Dendritic cell treated with granulocyte-macrophage colony-stimulating factor and Interleukin-4, amounts not matched to agents 40 ng/mL and 50 ng/mL, for 4 days (primary cell): ENCODE measurements at regions of chr4 and their contacts with region 1.

Region 1: DNA sequence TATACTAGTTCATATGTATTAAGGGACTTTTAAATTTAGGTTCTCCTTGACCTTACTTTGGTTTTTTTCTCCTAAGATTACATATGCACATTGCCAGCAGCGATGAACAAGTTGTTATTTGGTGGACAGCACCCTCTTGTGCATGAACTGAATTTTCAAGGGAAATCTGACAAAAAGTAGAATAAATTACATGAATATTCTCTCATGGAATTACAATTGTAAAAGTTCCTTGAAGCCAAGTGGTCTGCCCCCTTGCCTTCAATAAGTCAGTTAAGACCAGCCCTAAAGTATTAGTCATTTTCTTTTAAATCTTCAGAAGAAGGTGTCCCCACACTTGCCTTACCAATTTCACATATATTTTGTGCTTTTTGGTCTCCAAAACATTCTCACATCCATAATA is 30.7 kb upstream of the SMARCA5 start:
- H3K4me3 Mint-ChIP-seq: no peak overlapping the region
- H3K27ac Mint-ChIP-seq: no peak overlapping the region
- H3K4me1 Mint-ChIP-seq: no peaks in the 10 kb centered on the region
- H3K27me3 Mint-ChIP-seq: no peaks in the 10 kb centered on the region

Region 2: GRCh38 chr4:143207557-143207956 is 275.3 kb before region 1 on chr4:
- intact Hi-C with region 1: loop called (anchors 2 kb)
- H3K4me3 Mint-ChIP-seq: no peak overlapping the region
- H3K27ac Mint-ChIP-seq: no peak overlapping the region
- H3K4me1 Mint-ChIP-seq: no peaks in the 10 kb centered on the region
- H3K27me3 Mint-ChIP-seq: no peaks in the 10 kb centered on the region

Region 3: DNA sequence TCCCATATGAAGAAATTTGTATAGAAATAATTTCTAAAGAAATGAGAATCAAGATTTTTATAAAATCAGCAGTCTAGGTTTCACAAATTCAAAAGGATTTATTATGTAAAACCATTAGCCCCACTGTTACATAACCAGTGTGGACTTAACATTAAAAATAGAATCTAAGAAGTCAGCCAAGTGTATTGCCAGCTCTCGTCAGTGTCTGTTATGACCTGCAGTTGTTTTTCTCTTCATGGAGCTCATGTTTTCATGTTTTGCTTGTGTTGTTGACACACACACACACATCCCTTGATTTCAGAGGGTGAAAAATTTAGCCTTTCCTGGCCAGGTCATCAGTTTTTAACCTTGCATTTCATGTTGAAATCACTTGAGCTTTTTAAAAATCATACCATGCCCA is 258.6 kb before region 1 on chr4:
- intact Hi-C with region 1: no loop called
- H3K4me3 Mint-ChIP-seq: no peak overlapping the region
- H3K27ac Mint-ChIP-seq: no peak overlapping the region
- H3K4me1 Mint-ChIP-seq: no peaks in the 10 kb centered on the region
- H3K27me3 Mint-ChIP-seq: no peaks in the 10 kb centered on the region

Region 4: GRCh38 chr4:143399113-143399949 is 83.5 kb before region 1 on chr4:
- intact Hi-C with region 1: loop called (anchors 5 kb)
- H3K4me3 Mint-ChIP-seq: no peak overlapping the region
- H3K27ac Mint-ChIP-seq: no peak overlapping the region
- H3K4me1 Mint-ChIP-seq: peaks cover 19% of the 10 kb centered on the region
- H3K27me3 Mint-ChIP-seq: no peaks in the 10 kb centered on the region

Region 5: GRCh38 chr4:143417679-143418403 is 65.0 kb before region 1 on chr4:
- intact Hi-C with region 1: no loop called
- H3K4me3 Mint-ChIP-seq: no peak overlapping the region
- H3K27ac Mint-ChIP-seq: no peak overlapping the region
- H3K4me1 Mint-ChIP-seq: no peaks in the 10 kb centered on the region
- H3K27me3 Mint-ChIP-seq: no peaks in the 10 kb centered on the region

Region 6: GRCh38 chr4:143626134-143626911 is 143.5 kb after region 1 on chr4:
- intact Hi-C with region 1: no loop called
- H3K4me3 Mint-ChIP-seq: no peak overlapping the region
- H3K27ac Mint-ChIP-seq: no peak overlapping the region
- H3K4me1 Mint-ChIP-seq: no peaks in the 10 kb centered on the region
- H3K27me3 Mint-ChIP-seq: peaks cover 3% of the 10 kb centered on the region